ENCODE measurements at regions of chr6 and their contacts with region 1.

Region 1: GRCh38 chr6:157139054-157139708 is 184.1 kb downstream of the TMEM242 start:
- DNase-seq: no peak
- ATAC-seq: no peak
- H3K4me3 ChIP-seq: no peak overlapping the region
- H3K27ac ChIP-seq: no peak overlapping the region
- H3K4me1 ChIP-seq: peaks cover 4 to 36% (median 29%) of the 10 kb centered on the region in 9 donors
- H3K27me3 ChIP-seq: no peaks in the 10 kb centered on the region
- CTCF ChIP-seq: peak in 6 of 9 donors; percentile 24 to 48 (median 35)

Region 2: GRCh38 chr6:157021344-157021992 is 117.7 kb before region 1 on chr6:
- intact Hi-C with region 1: no loop called
- DNase-seq: peak; percentile 91 to 92
- ATAC-seq: peak; percentile 93 to 96 (median 94)
- H3K4me3 ChIP-seq: peak overlapping the region; percentile 59 to 88 (median 78)
- H3K27ac ChIP-seq: peak overlapping the region; percentile 94 to 100 (median 98)
- H3K4me1 ChIP-seq: peaks cover 0 to 63% (median 47%) of the 10 kb centered on the region in 9 donors
- H3K27me3 ChIP-seq: no peaks in the 10 kb centered on the region
- CTCF ChIP-seq: peak in 8 of 9 donors; percentile 29 to 71 (median 48)

Region 3: DNA sequence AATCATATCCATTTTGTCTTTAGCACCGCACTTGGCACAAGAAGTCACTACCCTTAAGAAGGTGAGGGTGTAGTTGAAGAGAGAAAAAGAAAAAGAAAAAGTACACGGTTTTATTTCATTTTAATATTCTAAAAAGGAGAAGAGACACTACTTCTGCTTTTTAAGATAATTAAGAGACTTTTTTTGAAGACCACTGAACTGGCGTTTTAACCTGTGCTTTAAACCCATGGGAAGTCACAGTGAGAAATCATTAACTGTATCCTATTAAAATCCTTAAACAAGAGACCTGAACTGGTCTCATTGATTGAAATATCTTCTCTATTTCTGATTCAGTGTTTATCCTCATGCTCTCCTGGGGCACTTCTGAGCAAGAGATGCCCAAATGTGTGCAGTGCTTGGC is 59.4 kb before region 1 on chr6:
- intact Hi-C with region 1: loop called in 1 of 10 experiments (anchors 5 kb)
- DNase-seq: no peak
- ATAC-seq: no peak
- H3K4me3 ChIP-seq: no peak overlapping the region
- H3K27ac ChIP-seq: no peak overlapping the region
- H3K4me1 ChIP-seq: peaks cover 0 to 61% (median 27%) of the 10 kb centered on the region in 9 donors
- H3K27me3 ChIP-seq: no peaks in the 10 kb centered on the region
- CTCF ChIP-seq: no peak

Region 4: GRCh38 chr6:157184202-157185020 is 45.2 kb after region 1 on chr6:
- intact Hi-C with region 1: loop called in 1 of 10 experiments (anchors 10 kb)
- DNase-seq: peak; percentile 63 to 72
- ATAC-seq: peak; percentile 66 to 87 (median 76)
- H3K4me3 ChIP-seq: peak overlapping the region in 2 of 10 donors; percentile 20 to 23
- H3K27ac ChIP-seq: peak overlapping the region in 2 of 10 donors; percentile 5 to 24
- H3K4me1 ChIP-seq: peaks cover 0 to 42% (median 23%) of the 10 kb centered on the region in 9 donors
- H3K27me3 ChIP-seq: no peaks in the 10 kb centered on the region
- CTCF ChIP-seq: peak; percentile 77 to 93 (median 90)